Activated naive CD4-positive, alpha-beta T cell treated with anti-CD3 and anti-CD28 coated beads for 36 hours (primary cell): ENCODE measurements at regions of chr12 and their contacts with region 1.

Region 1: DNA sequence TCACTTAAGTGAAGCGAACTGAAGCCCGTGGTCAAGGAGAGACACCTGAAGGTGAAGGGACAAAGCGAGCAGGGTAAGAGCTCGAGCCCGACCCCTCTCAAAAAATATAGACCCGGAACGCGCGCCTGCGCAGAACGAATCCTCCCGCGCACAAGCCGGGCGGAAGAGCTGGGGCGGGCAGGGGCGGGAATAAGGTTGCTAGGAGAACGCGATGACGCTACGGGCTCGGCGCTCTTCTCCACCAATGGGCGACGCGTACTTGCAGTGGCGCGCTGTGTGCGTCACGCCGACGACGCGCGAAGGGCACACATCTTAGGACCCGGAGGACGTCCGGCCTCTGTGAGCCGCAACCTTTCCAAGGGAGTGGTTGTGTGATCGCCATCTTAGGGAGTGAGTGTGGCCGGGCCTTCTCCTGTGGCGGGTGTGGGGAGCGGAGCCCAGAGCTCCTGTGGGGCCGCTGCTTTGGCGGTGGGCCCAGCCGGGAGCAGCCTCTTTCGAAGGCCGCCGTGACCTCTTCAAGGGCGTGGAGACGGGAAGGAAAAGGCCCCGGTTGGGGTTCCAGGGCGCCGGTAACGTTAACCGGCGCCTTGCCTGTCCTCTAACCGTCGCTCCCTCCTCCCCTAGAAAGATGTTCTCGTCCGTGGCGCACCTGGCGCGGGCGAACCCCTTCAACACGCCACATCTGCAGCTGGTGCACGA is at the start of gene SLC25A3:
- DNase-seq: peak; percentile 94
- H3K4me3 Mint-ChIP-seq: peak within 1 kb of the TSS; percentile 93
- H3K27ac Mint-ChIP-seq: peak within 1 kb of the TSS; percentile 96
- H3K4me1 Mint-ChIP-seq: peaks cover 22% of the 10 kb centered on the region
- H3K27me3 Mint-ChIP-seq: no peaks in the 10 kb centered on the region
- total RNA-seq, gene SLC25A3: 714 to 732 TPM

Region 2: DNA sequence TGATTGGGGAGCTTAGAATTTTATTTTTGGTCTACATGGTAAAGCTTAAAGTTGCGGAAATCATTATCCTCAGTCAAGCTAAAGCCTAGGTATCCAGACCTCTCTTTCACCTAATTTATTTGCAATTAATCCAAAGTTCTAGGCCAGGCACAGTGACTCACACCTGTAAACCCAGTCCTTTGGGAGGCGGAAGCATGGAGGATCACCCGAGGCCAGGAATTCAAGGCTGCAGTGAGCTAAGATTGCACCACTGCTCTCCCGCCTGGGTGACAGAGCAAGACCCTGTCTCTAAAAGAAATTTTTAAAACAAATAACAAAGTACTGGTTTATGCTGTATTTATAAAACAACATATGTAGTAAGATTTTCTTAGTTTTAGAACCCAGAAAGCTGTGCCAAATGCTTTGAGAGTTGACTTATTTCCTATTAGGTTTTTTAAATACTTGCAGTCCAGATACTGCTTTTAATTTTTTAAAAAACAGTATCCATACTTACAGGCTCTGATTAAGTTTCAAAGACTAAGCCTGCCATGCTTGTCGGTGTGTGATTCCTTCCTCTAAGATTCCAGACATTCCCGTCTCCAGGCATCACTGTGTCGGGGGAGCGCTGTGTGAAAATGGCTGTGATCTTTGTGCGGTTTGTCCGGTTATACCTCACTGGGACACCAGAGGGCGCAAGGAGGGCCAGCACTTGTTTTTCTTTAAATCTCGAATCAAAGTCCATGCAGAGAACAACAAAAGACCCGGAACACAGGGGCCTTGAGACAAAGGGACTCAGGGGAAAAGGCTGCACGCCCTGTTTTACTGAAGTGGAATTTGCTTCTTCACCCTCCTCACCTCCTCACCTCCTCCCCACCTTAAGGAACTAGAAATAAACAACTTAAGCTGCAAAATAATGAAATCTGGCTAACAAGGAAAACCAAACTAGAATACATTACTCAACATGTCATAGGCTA is 102.7 kb before region 1 on chr12:
- CTCF ChIA-PET with region 1: no interaction called
- intact Hi-C with region 1: loop called (anchors 1 kb)
- DNase-seq: peak; percentile 91
- H3K4me3 Mint-ChIP-seq: peak overlapping the region; percentile 59
- H3K27ac Mint-ChIP-seq: peak overlapping the region; percentile 87
- H3K4me1 Mint-ChIP-seq: peaks cover 4% of the 10 kb centered on the region
- H3K27me3 Mint-ChIP-seq: no peaks in the 10 kb centered on the region

Region 3: DNA sequence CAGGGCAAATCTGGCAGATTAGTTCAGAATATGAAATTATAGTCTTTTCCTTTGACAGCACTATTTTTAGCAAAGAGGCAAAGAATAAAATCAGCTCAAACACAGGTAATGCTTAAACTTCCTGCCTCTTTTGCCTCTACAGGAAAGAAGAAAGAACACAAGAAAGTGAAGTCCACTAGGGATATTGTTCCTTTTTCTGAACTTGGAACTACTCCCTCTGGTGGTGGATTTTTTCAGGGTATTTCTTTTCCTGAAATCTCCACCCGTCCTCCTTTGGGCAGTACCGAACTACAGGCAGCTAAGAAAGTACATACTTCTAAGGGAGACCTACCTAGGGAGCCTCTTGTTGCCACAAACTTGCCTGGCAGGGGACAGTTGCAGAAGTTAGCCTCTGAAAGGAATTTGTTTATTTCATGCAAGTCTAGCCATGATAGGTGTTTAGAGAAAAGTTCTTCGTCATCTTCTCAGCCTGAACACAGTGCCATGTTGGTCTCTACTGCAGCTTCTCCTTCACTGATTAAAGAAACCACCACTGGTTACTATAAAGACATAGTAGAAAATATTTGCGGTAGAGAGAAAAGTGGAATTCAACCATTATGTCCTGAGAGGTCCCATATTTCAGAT is 60.7 kb before region 1 on chr12:
- CTCF ChIA-PET with region 1: interaction called, 3 read pairs
- intact Hi-C with region 1: loop called (anchors 5 kb)
- DNase-seq: no peak
- H3K4me3 Mint-ChIP-seq: no peak overlapping the region
- H3K27ac Mint-ChIP-seq: no peak overlapping the region
- H3K4me1 Mint-ChIP-seq: peaks cover 14% of the 10 kb centered on the region
- H3K27me3 Mint-ChIP-seq: no peaks in the 10 kb centered on the region

Region 4: DNA sequence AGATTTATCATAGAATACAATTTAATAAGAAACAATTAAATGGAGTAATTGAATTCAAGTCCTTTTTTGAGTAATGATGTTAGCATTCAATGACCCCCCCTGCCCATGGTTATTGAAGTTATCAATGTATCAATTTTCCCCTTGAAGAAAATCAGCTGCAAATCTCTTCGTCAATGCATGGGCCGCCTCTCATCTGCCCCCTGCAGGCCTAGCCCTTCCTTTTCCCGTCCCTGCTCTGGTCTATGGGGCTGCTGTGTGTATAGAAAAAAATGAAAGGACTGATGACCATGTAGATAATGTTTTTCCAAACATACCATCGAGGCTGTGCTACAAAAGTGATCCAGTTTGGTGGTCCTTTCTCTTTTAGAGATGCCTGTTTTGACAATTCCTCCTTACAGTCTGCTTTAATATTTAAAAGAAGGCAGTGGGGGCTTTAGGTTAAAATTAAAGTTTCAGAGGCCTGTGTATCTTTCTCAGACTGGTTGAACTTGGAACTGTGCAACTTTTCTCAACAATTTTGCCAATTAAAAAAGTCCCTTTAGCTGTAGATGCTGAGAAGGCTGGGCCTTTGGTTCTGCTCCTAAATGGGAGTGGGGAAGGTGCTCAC is 149.9 kb after region 1 on chr12:
- CTCF ChIA-PET with region 1: no interaction called
- intact Hi-C with region 1: loop called (anchors 5 kb)
- DNase-seq: peak; percentile 60
- H3K4me3 Mint-ChIP-seq: no peak overlapping the region
- H3K27ac Mint-ChIP-seq: no peak overlapping the region
- H3K4me1 Mint-ChIP-seq: peaks cover 21% of the 10 kb centered on the region
- H3K27me3 Mint-ChIP-seq: peaks cover 22% of the 10 kb centered on the region

Region 5: GRCh38 chr12:100200463-100201181 is 1607.1 kb after region 1 on chr12 and contains the start of gene ACTR6:
- CTCF ChIA-PET with region 1: no interaction called
- intact Hi-C with region 1: loop called (anchors 2 kb)
- DNase-seq: peak; percentile 98
- H3K4me3 Mint-ChIP-seq: peak within 1 kb of the TSS; percentile 99
- H3K27ac Mint-ChIP-seq: peak within 1 kb of the TSS; percentile 99
- H3K4me1 Mint-ChIP-seq: peaks cover 27% of the 10 kb centered on the region
- H3K27me3 Mint-ChIP-seq: no peaks in the 10 kb centered on the region
- total RNA-seq, gene ACTR6: 38.0 to 41.8 TPM